ENCODE measurements at regions of chr12 and their contacts with region 1.

Region 1: DNA sequence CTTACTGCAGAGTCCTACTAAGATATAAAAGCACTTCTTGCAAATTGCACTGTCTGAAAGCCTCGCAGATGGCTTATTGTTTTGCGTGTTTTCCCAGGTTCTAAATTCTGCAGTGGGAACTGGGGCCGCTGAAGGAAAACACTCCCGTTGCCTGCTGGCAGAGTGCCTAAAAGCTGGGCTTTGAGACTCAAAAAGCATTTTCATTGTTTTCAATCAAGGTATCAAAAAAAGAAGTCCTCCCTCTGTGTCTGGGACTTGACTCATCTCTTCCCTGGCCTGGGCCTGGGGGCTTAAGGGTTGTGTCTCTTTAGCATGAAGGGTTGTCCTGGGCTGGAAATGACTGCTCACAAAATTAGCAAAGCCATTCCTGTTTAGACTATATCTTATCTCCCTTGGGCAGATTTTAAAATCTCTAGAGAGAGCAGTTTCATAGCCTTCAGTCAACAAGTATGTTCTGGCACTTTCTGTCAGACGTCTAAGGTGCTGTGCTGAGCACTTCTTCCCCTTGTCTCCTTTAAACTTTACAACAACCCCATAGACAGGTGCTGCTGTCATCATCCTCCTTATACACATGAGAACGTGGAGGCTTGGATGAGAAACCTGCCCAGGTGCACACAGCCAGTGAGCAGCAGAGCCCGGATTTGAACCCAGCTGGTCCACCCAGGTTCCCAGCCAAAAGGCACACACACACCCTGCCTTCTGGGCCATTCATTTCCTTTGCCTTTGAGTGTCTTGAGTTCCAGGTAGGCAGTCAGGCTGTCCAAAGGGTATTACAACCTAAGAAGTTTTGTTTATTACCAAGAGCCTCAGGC is 31.1 kb downstream of the ELK3 start:
- DNase-seq: peak in 1 of 7 donors; percentile 63
- H3K4me3 ChIP-seq: no peak overlapping the region
- H3K27ac ChIP-seq: peak overlapping the region in 1 of 5 donors; percentile 11
- H3K4me1 ChIP-seq: peaks cover 0 to 9% of the 10 kb centered on the region in 2 donors
- H3K27me3 ChIP-seq: no peaks in the 10 kb centered on the region
- CTCF ChIP-seq: no peak
- POLR2A ChIP-seq: no peak

Region 2: DNA sequence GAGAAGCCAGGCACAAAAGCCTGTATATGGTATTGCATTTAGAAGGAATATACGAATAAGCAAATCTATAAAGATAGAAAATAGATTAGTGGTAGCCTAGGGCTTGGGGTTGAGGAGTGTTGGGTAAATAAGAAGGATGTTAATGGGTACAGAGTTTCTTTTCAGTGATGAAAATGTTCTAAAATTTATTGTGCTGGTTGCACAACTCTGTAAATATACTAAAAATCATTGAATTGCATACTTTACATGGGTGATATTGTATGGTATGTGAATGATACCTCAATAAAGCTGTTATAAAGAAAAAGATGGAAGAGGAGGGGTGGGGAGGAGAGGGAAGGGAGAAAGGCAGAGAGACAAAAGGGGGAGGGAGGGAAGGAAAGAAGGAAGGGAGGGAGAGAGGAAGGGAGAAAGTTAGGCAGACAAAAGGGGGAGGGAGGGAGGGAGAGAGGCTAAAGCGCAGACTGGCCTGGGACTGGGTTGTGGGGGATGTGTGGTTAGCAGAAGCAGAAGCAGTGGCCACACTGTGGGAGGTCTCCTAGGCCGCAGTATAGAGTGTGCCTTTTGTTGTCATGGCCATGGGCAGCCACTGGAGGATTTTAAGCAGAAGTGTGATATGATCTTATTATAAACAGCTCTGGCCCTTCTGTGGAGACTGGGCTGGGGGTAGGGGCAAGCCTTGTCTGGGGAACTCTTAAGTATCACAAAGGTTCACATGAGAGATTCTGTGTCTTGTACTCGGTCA is 104.7 kb before region 1 on chr12:
- intact Hi-C with region 1: no loop called
- DNase-seq: peak in 1 of 7 donors; percentile 8
- H3K4me3 ChIP-seq: no peak overlapping the region
- H3K27ac ChIP-seq: peak overlapping the region in 1 of 5 donors; percentile 45
- H3K4me1 ChIP-seq: no peaks in the 10 kb centered on the region
- H3K27me3 ChIP-seq: no peaks in the 10 kb centered on the region
- CTCF ChIP-seq: peak in 1 of 6 experiments; percentile 11
- POLR2A ChIP-seq: no peak

Region 3: DNA sequence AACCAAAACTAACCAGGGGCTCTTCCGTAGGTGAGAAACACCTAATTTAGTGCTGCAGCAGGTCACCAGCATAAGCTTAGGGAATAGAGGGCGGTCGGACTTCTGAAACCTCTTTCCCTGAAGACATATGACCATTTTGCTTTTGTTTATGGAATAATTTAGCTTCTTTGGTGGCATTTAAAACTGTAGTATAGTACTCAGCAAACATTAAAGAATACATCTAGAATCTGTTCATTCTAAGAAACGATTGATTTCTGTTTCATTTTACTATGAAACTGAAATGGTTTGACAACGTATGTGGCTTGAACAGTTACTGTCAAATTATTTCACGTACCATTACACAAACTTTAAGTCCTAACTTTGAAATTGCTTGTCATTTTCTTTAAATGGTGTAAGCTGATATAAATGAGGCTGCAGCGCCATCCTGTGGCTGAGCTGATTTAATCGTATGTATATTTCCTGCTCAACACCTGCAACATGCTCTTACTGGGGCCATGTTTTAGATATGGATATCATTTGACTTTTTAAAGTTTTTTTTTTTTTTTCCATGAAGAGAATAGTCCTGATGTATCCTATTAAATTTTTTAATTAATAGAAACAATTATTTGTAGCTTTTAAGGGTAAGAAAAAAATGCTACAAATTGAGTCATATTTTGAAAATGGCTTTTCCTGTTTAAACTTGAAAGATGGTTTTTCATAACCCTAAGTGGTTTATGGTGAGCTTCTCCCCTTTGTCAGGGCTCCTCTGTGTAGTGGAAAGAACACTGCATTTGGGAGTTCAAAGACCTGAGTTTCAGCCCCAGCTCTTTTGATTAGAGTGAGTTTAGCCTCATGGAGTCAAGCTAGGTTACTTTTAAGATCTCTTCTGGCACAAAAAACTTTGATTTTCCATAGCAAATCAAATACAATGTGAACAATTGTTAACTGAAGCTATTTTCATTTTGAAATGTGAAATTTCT is 291.5 kb after region 1 on chr12:
- intact Hi-C with region 1: loop called in 1 of 2 experiments (anchors 5 kb)
- DNase-seq: peak; percentile 55 to 91 (median 77)
- H3K4me3 ChIP-seq: no peak overlapping the region
- H3K27ac ChIP-seq: no peak overlapping the region
- H3K4me1 ChIP-seq: no peaks in the 10 kb centered on the region
- H3K27me3 ChIP-seq: no peaks in the 10 kb centered on the region
- CTCF ChIP-seq: peak; percentile 52 to 84 (median 76)
- POLR2A ChIP-seq: no peak

Measured in adrenal gland (tissue), 19 donors.